MCF 10A (cell line): ENCODE measurements at regions of chr14 and their contacts with region 1.

Region 1: DNA sequence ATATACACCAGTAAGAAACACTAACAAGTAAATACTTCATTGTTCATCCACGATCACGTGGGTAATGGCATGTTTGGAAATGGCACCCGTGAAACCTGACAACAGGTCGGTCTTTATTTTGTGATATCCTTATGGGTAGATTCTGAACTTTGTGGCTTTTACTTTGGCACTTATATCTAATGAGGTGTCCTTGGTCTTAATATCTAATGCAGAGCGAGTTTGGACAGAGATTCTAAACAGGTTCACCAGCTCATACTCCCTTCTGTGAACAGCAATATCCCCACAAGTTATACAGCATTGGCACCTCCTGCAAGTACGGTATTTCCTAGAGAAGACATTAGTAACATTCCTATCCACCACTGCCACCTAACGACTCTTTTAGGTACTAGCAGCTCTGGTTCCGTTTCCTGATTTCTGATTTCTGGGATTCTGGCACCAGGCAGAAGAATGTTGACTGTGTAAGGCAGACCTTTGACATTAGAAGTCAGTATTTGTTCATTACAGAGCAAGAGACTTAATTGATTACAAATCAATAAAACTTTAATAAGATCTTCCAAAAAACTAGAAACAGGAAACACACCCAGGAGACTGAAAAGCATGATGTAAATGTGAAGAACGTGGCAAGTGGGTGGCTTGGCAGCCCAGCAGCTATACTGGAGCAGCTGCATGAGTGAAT is 2.4 kb downstream of the ANG start:
- DNase-seq: peak; percentile 77
- H3K4me3 Mint-ChIP-seq: peak overlapping the region; percentile 47
- H3K27ac Mint-ChIP-seq: no peak overlapping the region
- H3K4me1 Mint-ChIP-seq: peaks cover 10% of the 10 kb centered on the region
- H3K27me3 Mint-ChIP-seq: no peaks in the 10 kb centered on the region
- CTCF ChIP-seq: peak; percentile 81

Region 2: DNA sequence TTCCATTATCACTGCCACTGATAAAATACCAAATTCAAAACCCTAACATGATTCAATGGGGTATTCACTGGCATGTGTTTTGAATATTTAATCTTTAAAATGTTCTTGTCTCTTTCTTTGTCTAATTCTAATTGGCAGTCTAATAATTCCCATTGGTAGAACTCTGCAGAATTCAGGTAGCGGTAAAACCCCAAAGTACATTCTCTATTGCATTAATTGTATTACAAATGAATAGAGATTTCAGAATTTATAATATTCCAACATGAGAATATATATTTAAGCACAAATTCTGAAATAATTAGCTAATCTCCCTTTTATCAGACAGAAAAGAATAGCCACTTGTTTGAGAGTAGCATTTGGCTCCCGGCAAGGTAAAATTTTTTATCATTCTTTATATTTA is 552.5 kb before region 1 on chr14 and contains the start of gene OR4N5:
- CTCF ChIA-PET with region 1: no interaction called
- POLR2A ChIA-PET with region 1: no interaction called
- intact Hi-C with region 1: no loop called
- DNase-seq: no peak
- H3K4me3 Mint-ChIP-seq: no peak within 1 kb of the TSS
- H3K27ac Mint-ChIP-seq: no peak within 1 kb of the TSS
- H3K4me1 Mint-ChIP-seq: no peaks in the 10 kb centered on the region
- H3K27me3 Mint-ChIP-seq: peaks cover 52% of the 10 kb centered on the region
- CTCF ChIP-seq: no peak
- total RNA-seq, gene OR4N5: not detected in 2 replicates

Region 3: GRCh38 chr14:20624495-20625070 is 66.4 kb before region 1 on chr14:
- CTCF ChIA-PET with region 1: interaction called, 12 read pairs
- POLR2A ChIA-PET with region 1: interaction called, 123 read pairs
- intact Hi-C with region 1: no loop called
- DNase-seq: peak; percentile 87
- H3K4me3 Mint-ChIP-seq: peak overlapping the region; percentile 79
- H3K27ac Mint-ChIP-seq: peak overlapping the region; percentile 76
- H3K4me1 Mint-ChIP-seq: peaks cover 42% of the 10 kb centered on the region
- H3K27me3 Mint-ChIP-seq: no peaks in the 10 kb centered on the region
- CTCF ChIP-seq: no peak

Region 4: GRCh38 chr14:20657216-20658128 is 33.5 kb before region 1 on chr14:
- CTCF ChIA-PET with region 1: interaction called, 15 read pairs
- POLR2A ChIA-PET with region 1: no interaction called
- intact Hi-C with region 1: no loop called
- DNase-seq: peak; percentile 17
- H3K4me3 Mint-ChIP-seq: no peak overlapping the region
- H3K27ac Mint-ChIP-seq: no peak overlapping the region
- H3K4me1 Mint-ChIP-seq: peaks cover 7% of the 10 kb centered on the region
- H3K27me3 Mint-ChIP-seq: peaks cover 42% of the 10 kb centered on the region
- CTCF ChIP-seq: peak; percentile 10

Region 5: GRCh38 chr14:20662968-20663732 is 27.8 kb before region 1 on chr14:
- CTCF ChIA-PET with region 1: interaction called, 8 read pairs
- POLR2A ChIA-PET with region 1: no interaction called
- intact Hi-C with region 1: loop called (anchors 1 kb)
- DNase-seq: peak; percentile 67
- H3K4me3 Mint-ChIP-seq: peak overlapping the region; percentile 65
- H3K27ac Mint-ChIP-seq: no peak overlapping the region
- H3K4me1 Mint-ChIP-seq: peaks cover 13% of the 10 kb centered on the region
- H3K27me3 Mint-ChIP-seq: peaks cover 18% of the 10 kb centered on the region
- CTCF ChIP-seq: peak; percentile 45

Region 6: DNA sequence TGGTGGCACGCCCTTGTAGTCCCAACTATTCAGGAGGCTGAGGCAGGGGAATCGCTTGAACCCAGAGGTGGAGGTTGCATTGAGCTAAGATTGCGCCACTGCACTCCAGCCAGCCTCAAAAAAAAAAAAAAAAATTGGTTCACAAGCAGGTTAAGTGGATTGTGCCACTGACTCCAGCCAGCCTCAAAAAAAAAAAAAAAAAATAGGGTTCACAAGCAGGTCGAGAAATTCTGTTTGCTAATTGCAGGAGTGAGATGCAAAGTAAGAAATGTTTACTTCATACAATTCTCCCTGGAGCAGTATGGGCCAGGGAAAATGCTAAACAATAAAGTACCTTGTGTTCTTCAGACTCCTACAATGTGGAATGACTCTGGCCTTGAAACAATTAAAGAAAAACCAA is 83.4 kb after region 1 on chr14:
- CTCF ChIA-PET with region 1: no interaction called
- POLR2A ChIA-PET with region 1: no interaction called
- intact Hi-C with region 1: no loop called
- DNase-seq: no peak
- H3K4me3 Mint-ChIP-seq: no peak overlapping the region
- H3K27ac Mint-ChIP-seq: no peak overlapping the region
- H3K4me1 Mint-ChIP-seq: no peaks in the 10 kb centered on the region
- H3K27me3 Mint-ChIP-seq: peaks cover 47% of the 10 kb centered on the region
- CTCF ChIP-seq: no peak

Region 7: DNA sequence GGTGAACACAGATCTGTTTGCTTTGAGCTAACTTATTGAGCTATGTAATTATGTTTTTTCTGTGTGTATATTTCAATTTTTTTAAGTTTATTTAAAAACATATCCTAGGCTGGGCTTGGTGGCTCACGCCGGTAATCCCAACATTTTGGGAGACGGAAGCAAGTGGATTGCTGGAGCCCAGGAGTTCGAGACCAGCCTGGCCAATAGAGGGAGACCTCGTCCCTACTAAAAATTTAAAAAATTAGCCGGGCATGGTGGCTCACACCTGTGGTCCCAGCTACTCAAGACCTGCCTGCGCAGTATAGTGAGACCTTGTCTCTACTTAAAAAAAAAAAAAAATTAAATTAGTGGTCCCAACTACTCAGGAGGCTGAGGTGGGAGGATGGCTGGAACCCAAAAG is 127.9 kb after region 1 on chr14:
- CTCF ChIA-PET with region 1: no interaction called
- POLR2A ChIA-PET with region 1: no interaction called
- intact Hi-C with region 1: no loop called
- DNase-seq: no peak
- H3K4me3 Mint-ChIP-seq: no peak overlapping the region
- H3K27ac Mint-ChIP-seq: no peak overlapping the region
- H3K4me1 Mint-ChIP-seq: no peaks in the 10 kb centered on the region
- H3K27me3 Mint-ChIP-seq: peaks cover 13% of the 10 kb centered on the region
- CTCF ChIP-seq: no peak